Mucosa of descending colon (tissue), 3 donors: ENCODE measurements at regions of chr14 and their contacts with region 1.

Region 1: DNA sequence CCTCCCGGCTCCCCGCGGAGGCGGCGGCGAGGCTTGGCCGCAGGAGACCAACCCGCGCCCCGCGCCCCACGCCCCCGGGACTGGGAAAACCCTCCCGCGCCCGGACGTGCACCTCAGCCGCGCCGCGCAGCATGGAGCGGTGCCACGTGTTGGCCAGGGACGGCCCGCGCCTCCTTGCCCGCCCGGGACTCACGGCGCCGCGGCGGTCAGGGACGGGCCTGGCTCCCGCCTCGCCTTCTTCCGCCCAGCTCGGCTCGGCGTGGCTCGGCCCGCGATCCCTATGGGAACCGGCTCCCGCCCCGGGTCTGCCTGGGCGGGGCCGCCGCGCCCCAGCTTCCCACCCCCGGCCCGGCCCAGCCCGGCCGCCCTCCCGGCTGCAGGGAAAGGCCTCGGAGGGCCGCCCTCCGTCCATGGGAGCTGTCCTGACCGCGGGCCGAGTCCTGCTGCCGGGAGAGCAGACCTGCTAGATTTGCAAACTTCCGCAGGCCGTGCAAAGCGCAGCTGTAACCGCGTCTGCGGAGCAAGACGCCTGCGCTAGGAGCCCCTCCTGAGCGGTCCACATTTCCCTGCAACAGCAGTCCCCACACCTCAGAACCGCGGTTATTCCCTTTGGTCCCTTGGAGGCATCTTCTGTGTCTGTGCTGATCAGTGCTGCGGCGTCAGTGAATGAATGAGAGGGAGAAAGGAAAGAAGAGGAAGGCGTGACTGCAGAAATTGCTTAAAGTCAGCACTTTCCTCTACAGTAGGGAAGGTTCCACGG is at the start of gene CDKL1:
- DNase-seq: peak; percentile 76 to 88 (median 82)
- ATAC-seq: peak; percentile 89
- H3K4me3 ChIP-seq: peak within 1 kb of the TSS; percentile 36
- H3K4me1 ChIP-seq: peaks cover 2% of the 10 kb centered on the region
- CTCF ChIP-seq: no peak
- total RNA-seq, gene CDKL1: 31.0 to 70.4 (median 53.5) TPM

Region 2: GRCh38 chr14:50249136-50249800 is 147.5 kb before region 1 on chr14:
- intact Hi-C with region 1: no loop called
- DNase-seq: no peak
- ATAC-seq: no peak
- H3K4me3 ChIP-seq: no peak overlapping the region
- H3K4me1 ChIP-seq: no peaks in the 10 kb centered on the region
- CTCF ChIP-seq: no peak

Region 3: GRCh38 chr14:50311975-50312733 is 84.7 kb before region 1 on chr14 and contains the starts of genes DMAC2L and L2HGDH:
- intact Hi-C with region 1: loop called in 1 of 2 experiments (anchors 10 kb)
- DNase-seq: peak; percentile 94 to 96 (median 95)
- ATAC-seq: peak; percentile 97
- H3K4me3 ChIP-seq: peak within 1 kb of the TSS; percentile 56
- H3K4me1 ChIP-seq: peaks cover 7% of the 10 kb centered on the region
- CTCF ChIP-seq: peak; percentile 56
- total RNA-seq, gene DMAC2L: 18.9 to 27.6 (median 21.5) TPM
- total RNA-seq, gene L2HGDH: 7.2 to 11.2 (median 9.8) TPM

Region 4: DNA sequence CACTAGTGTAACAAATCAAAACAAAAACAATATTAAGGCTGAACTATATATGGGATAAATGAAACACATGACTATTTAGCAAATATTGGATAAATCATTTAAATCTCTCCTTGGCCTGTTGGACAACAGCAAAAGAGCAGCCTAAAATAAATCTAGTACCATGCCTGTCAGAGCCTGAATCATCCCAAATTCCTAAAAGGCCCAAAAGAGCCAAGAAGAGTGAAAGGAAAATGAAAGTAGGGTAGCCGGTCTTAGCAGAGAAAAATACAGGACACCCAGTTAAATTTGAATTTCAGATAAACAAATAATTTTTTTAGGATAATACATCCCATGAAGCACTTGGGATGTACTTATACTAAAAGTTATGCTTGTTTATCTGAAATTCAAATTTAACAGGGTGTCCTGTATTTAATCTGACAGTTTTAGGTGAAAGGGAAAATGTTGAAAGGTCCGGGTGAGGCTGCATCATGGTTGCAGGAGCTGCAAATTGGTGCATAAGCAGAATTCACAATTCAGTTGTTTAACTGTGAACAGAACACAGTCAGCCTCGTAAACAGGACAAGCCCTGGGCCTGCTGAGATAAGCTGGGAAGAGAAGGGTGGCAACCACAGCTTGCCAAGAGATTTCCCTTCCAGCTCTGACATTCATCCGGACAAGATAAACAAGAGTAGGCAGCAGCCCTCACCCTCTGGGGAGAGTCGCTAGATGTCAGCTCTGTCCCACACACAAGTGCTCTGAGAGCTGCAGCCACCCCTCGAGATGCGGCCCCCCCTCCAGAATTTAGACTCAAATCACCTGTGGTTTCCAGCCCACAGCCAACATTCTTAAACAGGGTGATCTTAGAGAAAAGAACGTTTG is 54.4 kb before region 1 on chr14:
- intact Hi-C with region 1: loop called in 1 of 2 experiments (anchors 10 kb)
- DNase-seq: peak in 2 of 3 donors; percentile 63 to 67
- ATAC-seq: peak; percentile 85
- H3K4me3 ChIP-seq: no peak overlapping the region
- H3K4me1 ChIP-seq: peaks cover 11% of the 10 kb centered on the region
- CTCF ChIP-seq: no peak